Psoas muscle (tissue), 8 donors: ENCODE measurements at regions of chr1 and their contacts with region 1.

Region 1: DNA sequence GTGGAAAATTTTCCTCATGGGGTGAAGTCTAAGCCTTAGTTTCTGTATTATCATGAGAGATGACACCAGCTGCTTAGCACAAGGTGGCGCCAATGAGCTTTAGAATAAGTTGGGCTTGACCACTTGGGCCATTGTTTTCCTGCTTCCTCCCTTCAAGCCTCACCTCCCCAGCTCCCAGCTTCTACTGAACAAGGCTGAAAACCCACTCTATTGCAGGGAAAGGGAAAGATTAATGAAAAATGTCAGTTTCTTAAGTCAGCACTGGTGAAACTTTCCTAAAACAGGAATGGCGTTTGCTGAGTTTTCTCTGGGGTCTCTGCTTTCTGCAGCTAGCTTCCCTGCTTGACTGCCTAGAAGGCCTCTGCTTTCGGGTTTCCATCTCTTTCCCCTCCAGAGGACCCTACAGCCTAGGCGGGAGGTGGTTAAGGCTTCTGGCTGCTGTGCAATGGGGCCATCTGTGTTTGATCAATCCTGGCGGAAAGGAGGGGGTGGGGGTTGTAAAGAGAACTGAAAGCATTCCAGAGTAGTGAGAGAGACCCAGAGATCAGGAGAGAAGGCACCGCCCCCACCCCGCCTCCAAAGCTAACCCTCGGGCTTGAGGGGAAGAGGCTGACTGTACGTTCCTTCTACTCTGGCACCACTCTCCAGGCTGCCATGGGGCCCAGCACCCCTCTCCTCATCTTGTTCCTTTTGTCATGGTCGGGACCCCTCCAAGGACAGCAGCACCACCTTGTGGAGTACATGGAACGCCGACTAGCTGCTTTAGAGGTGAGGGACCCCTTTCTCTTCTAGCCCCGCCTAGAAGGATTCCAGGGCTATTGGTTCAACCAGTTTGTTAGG is at the start of gene OLFML3:
- DNase-seq: peak; percentile 82 to 89
- ATAC-seq: peak; percentile 62 to 76 (median 74)
- H3K4me3 ChIP-seq: peak within 1 kb of the TSS; percentile 41
- H3K27ac ChIP-seq: peak within 1 kb of the TSS; percentile 85
- H3K4me1 ChIP-seq: peaks cover 49% of the 10 kb centered on the region
- H3K27me3 ChIP-seq: no peaks in the 10 kb centered on the region
- CTCF ChIP-seq: peak; percentile 74
- total RNA-seq, gene OLFML3: 8.2 to 15.8 (median 10.7) TPM

Region 2: DNA sequence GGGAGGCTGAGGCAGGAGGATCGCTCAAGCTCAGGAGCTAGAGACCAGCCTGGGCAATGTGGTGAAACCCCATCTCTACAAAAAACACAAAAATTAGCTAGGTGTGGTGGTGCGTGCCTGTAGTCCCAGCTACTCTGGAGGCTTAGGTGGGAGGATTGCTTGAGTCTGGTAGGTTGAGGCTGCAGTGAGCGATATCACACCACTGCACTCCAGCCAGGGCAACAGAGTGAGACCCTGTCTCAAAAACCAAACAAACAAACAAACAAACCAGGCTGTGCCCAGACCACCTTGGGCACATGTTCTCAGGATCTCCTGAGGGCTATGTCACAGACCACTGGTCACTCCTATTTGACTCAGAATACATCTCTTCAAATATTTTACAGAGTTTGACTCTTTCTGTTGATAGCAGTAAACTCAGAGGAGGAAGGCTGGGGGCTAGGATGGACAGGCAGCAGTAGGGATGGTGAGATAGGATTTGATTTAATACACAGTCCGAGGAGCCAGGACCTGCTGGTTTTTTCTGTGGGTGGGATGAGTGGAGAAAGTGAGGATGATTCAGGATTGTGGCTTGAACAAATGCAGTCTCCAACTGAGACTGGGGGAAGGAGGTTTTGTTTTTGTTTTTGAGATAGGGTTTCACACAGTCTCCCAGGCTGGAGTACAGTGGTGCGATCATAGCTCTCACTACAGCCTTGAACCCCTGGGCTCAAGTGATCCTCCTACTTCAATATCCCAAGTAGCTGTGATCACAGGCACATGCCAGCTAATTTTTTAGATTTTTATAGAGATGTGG is 46.7 kb after region 1 on chr1:
- intact Hi-C with region 1: loop called in 1 of 2 experiments (anchors 5 kb)
- DNase-seq: no peak
- ATAC-seq: peak; percentile 24 to 60 (median 48)
- H3K4me3 ChIP-seq: no peak overlapping the region
- H3K27ac ChIP-seq: peak overlapping the region; percentile 86
- H3K4me1 ChIP-seq: peaks cover 54% of the 10 kb centered on the region
- H3K27me3 ChIP-seq: no peaks in the 10 kb centered on the region
- CTCF ChIP-seq: no peak

Region 3: GRCh38 chr1:114075546-114076242 is 96.6 kb after region 1 on chr1:
- intact Hi-C with region 1: loop called in 1 of 2 experiments (anchors 10 kb)
- DNase-seq: no peak
- ATAC-seq: no peak
- H3K4me3 ChIP-seq: no peak overlapping the region
- H3K27ac ChIP-seq: no peak overlapping the region
- H3K4me1 ChIP-seq: peaks cover 8% of the 10 kb centered on the region
- H3K27me3 ChIP-seq: no peaks in the 10 kb centered on the region
- CTCF ChIP-seq: no peak

Region 4: GRCh38 chr1:114108751-114109255 is 129.7 kb after region 1 on chr1:
- intact Hi-C with region 1: loop called in 1 of 2 experiments (anchors 5 kb)
- DNase-seq: no peak
- ATAC-seq: no peak
- H3K4me3 ChIP-seq: no peak overlapping the region
- H3K27ac ChIP-seq: no peak overlapping the region
- H3K4me1 ChIP-seq: peaks cover 5% of the 10 kb centered on the region
- H3K27me3 ChIP-seq: no peaks in the 10 kb centered on the region
- CTCF ChIP-seq: no peak

Region 5: DNA sequence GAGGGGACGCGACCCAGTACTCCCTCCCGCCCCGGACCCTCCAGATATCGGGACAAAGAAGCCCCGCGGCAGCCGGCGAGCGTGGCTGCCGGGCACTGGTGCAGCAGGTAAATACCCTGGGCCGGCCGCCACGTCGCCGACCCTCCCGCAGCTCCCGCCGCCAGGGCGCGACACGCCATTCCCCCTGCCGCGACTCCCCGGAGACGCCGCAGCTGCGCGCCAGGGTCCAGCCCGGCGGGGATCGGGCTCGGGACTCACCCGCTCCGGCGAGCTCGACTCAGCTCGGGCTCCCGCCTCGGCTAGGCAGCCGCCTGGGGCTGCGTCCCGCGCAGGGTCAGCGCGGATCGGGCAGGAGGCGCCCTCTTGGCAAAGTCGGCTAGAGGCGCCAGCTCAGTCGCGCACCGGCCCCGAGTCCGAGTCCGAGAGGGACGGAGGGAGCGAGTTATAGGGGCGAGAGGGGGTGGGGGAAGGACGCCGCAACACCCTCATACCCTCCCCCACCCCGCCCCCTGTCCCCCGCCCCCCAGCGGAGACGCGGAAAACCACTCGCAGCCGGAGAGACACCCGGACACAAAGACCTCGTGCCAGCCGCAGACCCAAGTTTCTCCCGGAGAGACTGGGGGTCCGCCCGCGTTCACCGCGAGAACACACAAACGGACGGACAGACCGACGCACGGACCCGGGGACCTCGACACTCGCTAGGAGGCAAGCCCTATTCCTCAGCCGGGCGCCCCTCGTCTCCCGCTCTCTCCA is 173.6 kb after region 1 on chr1:
- intact Hi-C with region 1: loop called in 1 of 2 experiments (anchors 5 kb)
- DNase-seq: peak; percentile 59 to 72
- ATAC-seq: peak; percentile 69 to 83 (median 82)
- H3K4me3 ChIP-seq: peak overlapping the region; percentile 67
- H3K27ac ChIP-seq: no peak overlapping the region
- H3K4me1 ChIP-seq: peaks cover 20% of the 10 kb centered on the region
- H3K27me3 ChIP-seq: peaks cover 2 to 62% (median 44%) of the 10 kb centered on the region in 3 donors
- CTCF ChIP-seq: no peak

Region 6: DNA sequence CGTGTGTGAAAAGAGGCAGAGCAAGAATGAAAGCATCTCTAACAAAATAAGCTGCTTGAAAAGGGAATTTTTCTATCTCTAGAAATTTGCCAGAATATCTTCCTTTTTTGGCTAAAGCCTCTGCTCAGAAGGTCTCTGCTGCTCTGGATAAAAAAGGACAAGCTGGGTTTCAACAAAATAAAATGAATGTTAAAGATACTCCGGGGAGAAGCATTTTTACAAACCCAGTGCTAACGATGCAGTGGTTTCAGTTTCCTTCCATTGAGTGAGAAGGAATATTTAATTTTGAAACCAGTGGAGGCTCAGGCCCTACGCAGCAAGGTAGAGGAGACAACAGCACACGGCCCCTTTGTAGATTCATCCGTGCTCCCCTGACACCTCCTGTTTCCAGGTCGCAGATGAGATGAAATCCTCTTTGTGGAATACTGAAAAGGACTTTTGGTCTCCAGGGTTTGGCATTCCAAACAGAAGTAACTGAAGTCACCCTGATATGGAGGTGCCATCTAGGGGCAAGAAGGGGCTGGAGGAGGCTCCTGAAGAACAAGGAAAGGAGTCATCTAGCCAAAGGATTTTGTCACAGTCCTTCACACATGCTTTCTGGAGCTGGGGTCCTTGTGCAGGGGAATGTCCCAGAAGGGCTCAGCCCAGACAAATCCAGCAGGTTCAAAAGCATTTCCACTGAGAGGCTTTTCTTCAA is 240.2 kb after region 1 on chr1:
- intact Hi-C with region 1: loop called in 1 of 2 experiments (anchors 5 kb)
- DNase-seq: no peak
- ATAC-seq: peak; percentile 51 to 76 (median 62)
- H3K4me3 ChIP-seq: peak overlapping the region; percentile 22
- H3K27ac ChIP-seq: no peak overlapping the region
- H3K4me1 ChIP-seq: peaks cover 5% of the 10 kb centered on the region
- H3K27me3 ChIP-seq: no peaks in the 10 kb centered on the region
- CTCF ChIP-seq: peak; percentile 25

Region 7: GRCh38 chr1:114282751-114283403 is 303.8 kb after region 1 on chr1:
- intact Hi-C with region 1: loop called (anchors 2 kb)
- DNase-seq: peak; percentile 88 to 94
- ATAC-seq: peak; percentile 95 to 100 (median 98)
- H3K4me3 ChIP-seq: no peak overlapping the region
- H3K27ac ChIP-seq: no peak overlapping the region
- H3K4me1 ChIP-seq: no peaks in the 10 kb centered on the region
- H3K27me3 ChIP-seq: no peaks in the 10 kb centered on the region
- CTCF ChIP-seq: peak; percentile 86